RWPE1 (cell line): ENCODE measurements at regions of chr5 and their contacts with region 1.

Region 1: DNA sequence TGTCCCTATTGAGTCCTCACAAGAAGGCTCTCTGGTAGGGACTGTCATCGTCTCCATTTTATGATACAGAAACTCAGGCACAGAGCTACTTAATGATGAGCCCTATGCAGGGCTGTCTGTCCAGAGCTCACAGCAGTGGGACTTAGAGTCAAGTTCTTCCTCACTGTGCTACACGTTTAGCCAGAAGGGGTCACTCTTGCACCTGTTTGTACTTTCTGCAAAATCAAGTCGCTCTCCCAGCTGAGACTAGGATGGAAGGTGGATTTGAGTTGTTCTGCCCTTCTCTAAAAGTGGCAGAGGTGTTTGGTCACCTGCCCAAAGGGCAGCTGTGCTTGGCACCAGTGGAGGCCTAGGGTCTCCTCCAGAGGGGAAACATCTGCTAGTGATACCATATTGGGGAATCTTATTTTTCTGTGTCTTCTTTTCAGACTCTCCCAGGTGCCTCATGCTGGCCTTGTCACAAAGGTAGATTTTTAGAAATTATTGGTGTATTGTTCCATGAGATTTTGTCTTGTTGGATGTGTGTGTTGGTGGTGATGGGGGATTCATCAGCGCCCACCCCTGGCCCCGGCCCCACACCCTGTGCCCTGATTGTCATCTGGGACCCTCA is 104.2 kb downstream of the PPARGC1B start:
- DNase-seq: peak; percentile 64
- H3K27ac ChIP-seq: peak overlapping the region; percentile 5; the same call in 1 of the 2 replicates
- CTCF ChIP-seq: peak; percentile 82

Region 2: DNA sequence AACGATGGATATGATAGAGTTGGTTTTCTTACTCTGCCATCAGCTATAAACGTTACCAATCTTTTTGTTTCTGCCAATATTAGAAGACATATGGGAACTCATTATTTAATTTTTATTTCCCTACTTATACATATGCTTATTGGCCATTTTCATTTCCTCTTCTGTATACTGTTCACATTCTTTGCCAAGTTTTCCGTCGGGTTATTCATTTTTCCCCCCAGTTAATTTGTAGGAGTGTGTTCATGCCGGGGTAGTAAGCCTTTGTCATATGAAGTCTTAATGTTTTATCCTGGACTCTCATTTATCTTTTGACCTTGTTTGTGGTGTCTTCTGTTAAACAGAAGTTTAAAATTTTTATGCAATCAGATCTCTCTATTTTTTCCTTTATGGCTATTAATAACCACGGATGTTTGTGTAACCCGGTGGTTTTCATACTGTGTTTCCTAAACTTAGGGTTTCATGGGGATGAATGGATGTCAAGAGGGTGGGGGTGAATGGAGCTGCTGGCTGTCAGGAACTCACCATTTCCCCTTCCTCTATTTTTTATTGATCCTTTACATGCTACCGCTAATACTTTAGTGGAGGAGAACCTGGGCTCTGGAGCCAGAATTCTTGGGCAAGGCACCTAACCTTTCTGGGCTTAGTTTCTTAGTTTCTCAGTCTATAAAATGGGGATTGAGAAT is 146.7 kb before region 1 on chr5:
- CTCF ChIA-PET with region 1: no interaction called
- POLR2A ChIA-PET with region 1: no interaction called
- DNase-seq: no peak
- H3K27ac ChIP-seq: no peak overlapping the region
- CTCF ChIP-seq: no peak

Region 3: GRCh38 chr5:149990518-149991376 is 156.4 kb after region 1 on chr5:
- CTCF ChIA-PET with region 1: interaction called, 109 read pairs
- POLR2A ChIA-PET with region 1: no interaction called
- DNase-seq: peak; percentile 88
- H3K27ac ChIP-seq: no peak overlapping the region
- CTCF ChIP-seq: peak; percentile 97

Region 4: DNA sequence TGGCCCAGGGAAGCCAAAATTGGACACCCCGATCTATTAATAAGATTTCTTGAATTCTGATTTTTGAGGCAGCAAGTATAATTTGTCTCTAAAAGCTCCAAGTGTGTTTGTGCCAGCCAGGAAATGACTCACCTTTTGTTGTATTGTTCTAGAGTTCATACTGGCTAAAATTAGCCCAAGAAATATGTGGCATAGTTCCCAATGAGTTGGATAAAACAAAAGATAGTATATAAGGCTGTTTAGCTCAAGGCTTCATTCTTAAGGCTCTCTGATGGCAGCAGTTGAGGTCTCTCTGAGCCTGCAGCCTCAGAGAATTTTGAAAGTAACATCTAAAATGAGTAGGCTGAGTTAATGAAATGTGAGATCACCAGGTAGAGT is 187.8 kb after region 1 on chr5:
- CTCF ChIA-PET with region 1: no interaction called
- POLR2A ChIA-PET with region 1: no interaction called
- DNase-seq: peak; percentile 87
- H3K27ac ChIP-seq: peak overlapping the region; percentile 95
- CTCF ChIP-seq: no peak